Calu3 (cell line): ENCODE measurements at regions of chr1 and their contacts with region 1.

Region 1: DNA sequence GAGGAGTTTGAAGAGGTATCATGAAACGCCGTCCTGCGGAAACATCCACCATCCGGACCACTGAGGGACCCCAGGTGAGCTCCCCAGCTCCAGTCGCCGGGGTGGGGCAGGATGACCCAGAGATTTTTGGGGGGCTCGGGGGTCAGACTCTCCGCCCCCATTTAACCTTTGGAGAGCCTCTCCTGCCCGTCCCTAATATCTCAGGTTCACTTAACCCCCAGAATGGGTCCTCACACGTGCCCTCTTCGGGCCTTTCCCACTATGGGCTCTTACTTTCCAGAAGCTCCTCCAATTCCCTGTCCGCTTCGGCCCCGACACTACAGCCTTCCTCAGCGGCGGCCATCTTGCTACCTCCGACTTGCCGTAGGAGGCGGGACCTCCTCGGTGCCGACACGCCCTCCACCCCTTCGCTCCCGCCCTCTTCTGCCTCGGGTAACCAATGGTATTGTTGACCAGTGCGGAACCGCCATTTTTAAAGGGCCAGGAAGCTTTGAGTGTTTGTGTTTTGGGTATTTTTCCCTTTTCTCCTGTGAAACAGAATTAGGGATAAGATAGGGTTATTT is at the start of gene PEX19:
- DNase-seq: peak; percentile 97
- H3K4me3 Mint-ChIP-seq: peak within 1 kb of the TSS; percentile 89
- H3K27ac Mint-ChIP-seq: peak within 1 kb of the TSS; percentile 95
- H3K4me1 Mint-ChIP-seq: peaks cover 17% of the 10 kb centered on the region
- H3K27me3 Mint-ChIP-seq: no peaks in the 10 kb centered on the region
- CTCF ChIP-seq: no peak
- total RNA-seq, gene PEX19: 64.0 and 70.3 TPM in 2 replicates

Region 2: DNA sequence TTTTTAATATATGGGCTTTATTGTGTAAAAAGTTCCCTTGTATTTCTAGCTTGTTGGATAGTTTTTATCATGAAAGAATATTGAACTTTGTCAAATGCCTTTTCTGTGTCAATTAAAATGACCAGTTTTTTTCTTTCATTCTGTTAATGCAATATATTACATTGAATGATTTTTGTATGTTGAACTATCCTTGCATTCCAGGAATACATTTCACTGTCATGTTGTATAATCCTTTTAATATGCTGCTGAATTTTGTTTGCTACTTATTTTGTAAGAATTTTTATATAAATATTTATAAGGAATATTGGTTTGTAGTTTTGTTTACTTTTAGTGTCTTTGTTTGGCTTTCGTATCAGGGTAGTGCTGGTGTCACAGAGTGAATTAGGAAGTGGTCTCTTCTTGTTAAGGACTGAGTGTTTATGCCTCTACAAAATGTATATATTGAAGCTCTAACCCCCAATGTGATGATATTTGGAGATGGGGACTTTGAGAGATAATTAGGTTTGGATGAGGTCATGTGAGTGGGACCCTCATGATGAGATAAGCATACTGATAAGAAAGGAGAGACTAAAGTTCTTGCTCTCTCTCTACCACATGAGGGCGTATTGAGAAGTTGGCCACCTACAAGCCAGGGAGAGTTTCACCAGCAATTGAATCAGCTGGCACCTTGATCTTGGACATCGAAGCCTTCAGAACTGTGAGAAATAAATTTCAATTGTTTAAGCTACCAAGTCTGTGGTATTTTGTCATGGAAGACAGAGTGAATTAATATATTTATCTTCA is 250.2 kb after region 1 on chr1:
- CTCF ChIA-PET with region 1: interaction called, 12 read pairs
- intact Hi-C with region 1: no loop called
- DNase-seq: no peak
- H3K4me3 Mint-ChIP-seq: no peak overlapping the region
- H3K27ac Mint-ChIP-seq: no peak overlapping the region
- H3K4me1 Mint-ChIP-seq: peaks cover 18% of the 10 kb centered on the region
- H3K27me3 Mint-ChIP-seq: no peaks in the 10 kb centered on the region
- CTCF ChIP-seq: no peak